Calu3 (cell line): ENCODE measurements at regions of chr10 and their contacts with region 1.

Region 1: GRCh38 chr10:86399879-86400704 is 33.5 kb upstream of the GRID1 start:
- DNase-seq: peak; percentile 94
- H3K4me3 Mint-ChIP-seq: peak overlapping the region; percentile 71
- H3K27ac Mint-ChIP-seq: no peak overlapping the region
- H3K4me1 Mint-ChIP-seq: peaks cover 26% of the 10 kb centered on the region
- H3K27me3 Mint-ChIP-seq: no peaks in the 10 kb centered on the region
- CTCF ChIP-seq: peak; percentile 75

Region 2: GRCh38 chr10:86439544-86439943 is 39.5 kb after region 1 on chr10:
- CTCF ChIA-PET with region 1: interaction called, 7 read pairs
- intact Hi-C with region 1: loop called (anchors 5 kb)
- DNase-seq: peak; percentile 53
- H3K4me3 Mint-ChIP-seq: no peak overlapping the region
- H3K27ac Mint-ChIP-seq: peak overlapping the region; percentile 39
- H3K4me1 Mint-ChIP-seq: peaks cover 34% of the 10 kb centered on the region
- H3K27me3 Mint-ChIP-seq: no peaks in the 10 kb centered on the region
- CTCF ChIP-seq: no peak

Region 3: DNA sequence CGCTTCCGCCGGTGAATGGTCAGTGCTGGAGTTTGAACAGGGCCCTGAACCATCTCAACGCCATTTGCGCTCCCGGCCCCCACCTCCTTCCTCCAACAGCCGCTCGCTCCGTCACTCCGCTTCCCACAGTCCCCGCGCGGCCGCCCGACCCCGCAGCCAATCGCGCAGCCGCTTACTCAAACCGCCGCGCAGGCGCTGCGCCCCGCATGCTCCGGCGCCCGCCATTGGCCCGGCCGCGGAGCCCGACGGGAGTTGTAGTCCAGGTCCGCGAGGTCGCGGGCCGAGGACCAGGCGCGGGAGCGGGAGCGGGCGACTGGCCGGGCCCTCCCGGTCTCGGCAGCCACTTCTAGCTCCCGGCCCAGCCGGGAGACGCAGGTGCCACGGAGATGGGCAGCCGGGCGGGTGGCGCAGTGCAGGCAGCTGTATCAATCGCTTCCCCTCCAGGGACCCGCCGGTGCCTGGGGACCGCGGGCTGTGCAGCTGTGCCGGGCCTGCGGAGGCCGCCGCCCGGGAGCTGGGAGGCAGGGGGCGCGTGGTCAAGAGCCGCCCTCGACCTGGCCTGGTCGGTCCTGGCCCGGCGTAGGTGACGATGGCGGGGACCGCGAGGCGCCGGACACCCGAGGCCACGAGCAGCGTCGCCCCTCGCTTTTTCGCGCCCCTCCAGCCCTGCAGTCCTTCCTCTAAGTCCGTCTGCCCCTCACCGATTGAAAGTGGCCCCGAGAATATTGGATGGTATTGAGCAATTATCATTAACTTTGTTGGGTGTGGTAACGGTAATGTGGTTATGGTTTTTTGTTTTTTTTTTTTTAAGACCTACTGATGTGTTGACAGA is 121.8 kb after region 1 on chr10 and contains the start of gene WAPL:
- CTCF ChIA-PET with region 1: interaction called, 3 read pairs
- intact Hi-C with region 1: loop called (anchors 5 kb)
- DNase-seq: peak; percentile 93
- H3K4me3 Mint-ChIP-seq: peak within 1 kb of the TSS; percentile 91
- H3K27ac Mint-ChIP-seq: peak within 1 kb of the TSS; percentile 87
- H3K4me1 Mint-ChIP-seq: peaks cover 24% of the 10 kb centered on the region
- H3K27me3 Mint-ChIP-seq: no peaks in the 10 kb centered on the region
- CTCF ChIP-seq: no peak
- total RNA-seq, gene WAPL: 27.0 and 30.1 TPM in 2 replicates

Region 4: DNA sequence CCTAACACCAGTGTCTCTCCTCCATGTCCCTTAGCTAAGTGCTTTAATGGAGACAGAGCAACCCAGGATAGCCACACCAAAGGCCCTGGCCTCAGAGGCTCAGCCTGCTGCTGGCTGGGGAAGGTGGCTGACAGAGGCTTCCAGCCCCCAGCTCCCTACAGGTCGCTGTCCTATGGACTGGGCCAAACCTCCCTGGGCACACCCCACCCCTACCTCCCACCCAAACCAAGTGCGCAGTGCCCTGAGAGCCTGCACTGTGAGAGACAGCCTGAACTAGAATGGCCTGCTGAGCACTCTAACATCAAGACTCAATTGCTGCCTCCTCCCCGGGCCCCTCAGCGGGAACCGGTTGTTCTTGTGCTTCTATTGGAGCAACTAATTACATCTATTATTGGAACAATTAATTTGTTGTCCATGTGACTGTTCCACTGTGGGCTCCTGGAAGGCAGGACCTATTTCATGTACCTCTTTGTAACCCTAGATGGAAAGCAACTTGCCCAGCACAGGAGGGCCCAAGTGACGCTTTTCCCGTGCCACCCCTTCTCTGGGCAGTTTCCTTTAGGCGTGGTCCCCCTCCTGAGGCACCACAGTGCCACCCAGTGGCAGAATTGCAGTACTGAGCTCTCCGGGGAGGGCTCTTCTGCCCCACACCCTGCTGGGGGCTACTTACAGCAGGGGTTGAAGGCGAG is 185.1 kb after region 1 on chr10:
- CTCF ChIA-PET with region 1: interaction called, 15 read pairs
- intact Hi-C with region 1: loop called (anchors 1 kb)
- DNase-seq: peak; percentile 72
- H3K4me3 Mint-ChIP-seq: no peak overlapping the region
- H3K27ac Mint-ChIP-seq: no peak overlapping the region
- H3K4me1 Mint-ChIP-seq: no peaks in the 10 kb centered on the region
- H3K27me3 Mint-ChIP-seq: no peaks in the 10 kb centered on the region
- CTCF ChIP-seq: peak; percentile 80